Ovary (tissue), 10 donors: ENCODE measurements at regions of chrX and their contacts with region 1.

Region 1: GRCh38 chrX:10119399-10119990 is 37.3 kb upstream of the CLCN4 start:
- DNase-seq: peak; percentile 62 to 81 (median 74)
- H3K4me3 ChIP-seq: no peak overlapping the region
- H3K27ac ChIP-seq: no peak overlapping the region
- H3K4me1 ChIP-seq: no peaks in the 10 kb centered on the region
- H3K27me3 ChIP-seq: no peaks in the 10 kb centered on the region
- CTCF ChIP-seq: peak; percentile 99 to 100 (median 100)
- EP300 ChIP-seq: no peak
- POLR2A ChIP-seq: peak; percentile 55

Region 2: DNA sequence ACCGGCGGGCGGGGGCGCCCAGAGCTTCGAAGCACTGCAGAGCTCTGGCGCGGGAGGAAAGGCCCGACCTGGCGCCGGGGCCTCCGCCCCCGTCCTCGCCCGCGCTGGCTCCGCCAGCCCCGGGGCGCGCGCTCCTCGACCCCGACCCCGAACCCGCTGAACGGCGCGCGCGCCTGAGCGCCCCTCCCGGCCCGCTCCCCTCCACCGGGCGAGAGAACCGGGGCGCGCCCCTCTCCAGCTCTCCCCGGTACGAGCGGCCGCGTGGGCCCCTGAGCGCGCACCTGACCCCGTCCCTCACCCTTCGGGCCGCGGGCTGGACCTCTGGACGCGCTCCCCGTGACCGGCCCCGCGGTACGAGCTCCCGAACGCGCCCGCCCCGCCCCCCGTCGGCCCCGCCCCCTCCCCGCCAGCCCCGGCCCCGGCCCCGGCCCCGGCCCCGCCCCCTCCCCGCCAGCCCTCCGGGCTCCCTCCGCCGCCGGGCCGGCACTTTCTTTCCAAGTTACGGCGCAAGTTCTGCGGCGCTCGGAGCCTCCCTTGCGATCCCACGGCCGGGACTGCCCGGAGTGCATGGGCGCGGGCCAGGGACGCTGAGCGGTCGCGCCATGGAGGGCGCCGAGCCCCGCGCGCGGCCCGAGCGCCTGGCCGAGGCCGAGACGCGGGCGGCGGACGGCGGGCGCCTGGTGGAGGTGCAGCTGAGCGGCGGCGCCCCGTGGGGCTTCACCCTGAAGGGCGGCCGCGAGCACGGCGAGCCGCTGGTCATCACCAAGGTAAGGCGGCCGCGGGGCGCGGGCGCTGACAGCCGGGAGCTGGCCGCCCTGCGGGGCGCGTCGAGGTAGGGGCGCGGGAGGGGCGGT is 333.3 kb before region 1 on chrX and contains the start of gene SHROOM2:
- intact Hi-C with region 1: loop called in 1 of 4 experiments (anchors 10 kb)
- DNase-seq: peak; percentile 40 to 68 (median 62)
- H3K4me3 ChIP-seq: peak within 1 kb of the TSS; percentile 38
- H3K27ac ChIP-seq: peak within 1 kb of the TSS; percentile 75 to 78
- H3K4me1 ChIP-seq: peaks cover 6% of the 10 kb centered on the region
- H3K27me3 ChIP-seq: no peaks in the 10 kb centered on the region
- CTCF ChIP-seq: no peak
- EP300 ChIP-seq: no peak
- POLR2A ChIP-seq: no peak
- total RNA-seq, gene SHROOM2: 10.0 to 16.8 (median 12.2) TPM

Region 3: GRCh38 chrX:9859711-9860555 is 259.6 kb before region 1 on chrX:
- intact Hi-C with region 1: no loop called
- DNase-seq: no peak
- H3K4me3 ChIP-seq: no peak overlapping the region
- H3K27ac ChIP-seq: no peak overlapping the region
- H3K4me1 ChIP-seq: no peaks in the 10 kb centered on the region
- H3K27me3 ChIP-seq: no peaks in the 10 kb centered on the region
- CTCF ChIP-seq: no peak
- EP300 ChIP-seq: no peak
- POLR2A ChIP-seq: no peak

Region 4: DNA sequence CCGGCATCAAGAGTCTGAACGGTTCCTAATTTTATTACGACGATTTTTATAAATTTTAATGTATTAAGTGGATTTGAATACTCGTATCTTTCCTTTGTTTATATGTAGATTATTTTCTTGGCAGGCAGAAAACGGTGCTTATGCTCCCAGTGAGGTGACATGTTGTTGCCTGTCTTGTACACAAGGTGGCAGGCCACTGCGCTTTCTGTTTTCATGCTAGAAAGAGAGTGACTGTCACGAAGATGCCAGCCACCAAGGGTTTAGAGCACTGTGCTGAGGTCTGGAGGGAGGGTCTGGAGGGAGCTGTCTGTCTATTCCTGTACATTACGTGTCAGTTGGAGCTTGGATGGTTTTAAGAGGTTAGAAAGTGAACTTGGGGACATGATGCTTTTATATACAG is 245.5 kb before region 1 on chrX:
- intact Hi-C with region 1: loop called in 1 of 4 experiments (anchors 10 kb)
- DNase-seq: no peak
- H3K4me3 ChIP-seq: no peak overlapping the region
- H3K27ac ChIP-seq: no peak overlapping the region
- H3K4me1 ChIP-seq: peaks cover 3% of the 10 kb centered on the region
- H3K27me3 ChIP-seq: no peaks in the 10 kb centered on the region
- CTCF ChIP-seq: no peak
- EP300 ChIP-seq: no peak
- POLR2A ChIP-seq: no peak

Region 5: GRCh38 chrX:9885150-9885549 is 234.3 kb before region 1 on chrX:
- intact Hi-C with region 1: loop called in 1 of 4 experiments (anchors 10 kb)
- DNase-seq: peak; percentile 62 to 73 (median 64)
- H3K4me3 ChIP-seq: no peak overlapping the region
- H3K27ac ChIP-seq: no peak overlapping the region
- H3K4me1 ChIP-seq: peaks cover 6% of the 10 kb centered on the region
- H3K27me3 ChIP-seq: no peaks in the 10 kb centered on the region
- CTCF ChIP-seq: peak in 1 of 3 donors; percentile 29
- EP300 ChIP-seq: no peak
- POLR2A ChIP-seq: no peak

Region 6: GRCh38 chrX:9995855-9996339 is 123.6 kb before region 1 on chrX:
- intact Hi-C with region 1: loop called (anchors 2 to 5 kb)
- DNase-seq: peak; percentile 77 to 88 (median 87)
- H3K4me3 ChIP-seq: no peak overlapping the region
- H3K27ac ChIP-seq: no peak overlapping the region
- H3K4me1 ChIP-seq: no peaks in the 10 kb centered on the region
- H3K27me3 ChIP-seq: no peaks in the 10 kb centered on the region
- CTCF ChIP-seq: peak; percentile 74 to 95 (median 95)
- EP300 ChIP-seq: no peak
- POLR2A ChIP-seq: no peak

Region 7: GRCh38 chrX:10014462-10015356 is 104.8 kb before region 1 on chrX:
- intact Hi-C with region 1: loop called (anchors 5 kb)
- DNase-seq: peak; percentile 88 to 91 (median 90)
- H3K4me3 ChIP-seq: peak overlapping the region; percentile 54
- H3K27ac ChIP-seq: peak overlapping the region; percentile 85 to 92
- H3K4me1 ChIP-seq: no peaks in the 10 kb centered on the region
- H3K27me3 ChIP-seq: no peaks in the 10 kb centered on the region
- CTCF ChIP-seq: peak in 1 of 3 donors; percentile 6
- EP300 ChIP-seq: no peak
- POLR2A ChIP-seq: peak; percentile 62

Region 8: GRCh38 chrX:10089378-10089812 is 30.1 kb before region 1 on chrX:
- intact Hi-C with region 1: no loop called
- DNase-seq: no peak
- H3K4me3 ChIP-seq: no peak overlapping the region
- H3K27ac ChIP-seq: no peak overlapping the region
- H3K4me1 ChIP-seq: no peaks in the 10 kb centered on the region
- H3K27me3 ChIP-seq: no peaks in the 10 kb centered on the region
- CTCF ChIP-seq: no peak
- EP300 ChIP-seq: no peak
- POLR2A ChIP-seq: no peak